ENCODE measurements at regions of chr14 and their contacts with region 1.

Region 1: GRCh38 chr14:30621940-30622830 is at the start of gene SCFD1:
- DNase-seq: peak; percentile 92
- ATAC-seq: peak; percentile 97
- H3K4me3 Mint-ChIP-seq: peak within 1 kb of the TSS; percentile 93
- H3K27ac Mint-ChIP-seq: peak within 1 kb of the TSS; percentile 93
- H3K4me1 Mint-ChIP-seq: peaks cover 47% of the 10 kb centered on the region
- H3K27me3 Mint-ChIP-seq: no peaks in the 10 kb centered on the region
- CTCF ChIP-seq: no peak
- total RNA-seq, gene SCFD1: 70.1 and 83.6 TPM in 2 replicates

Region 2: GRCh38 chr14:30558675-30559555 is 63.3 kb before region 1 on chr14 and contains the start of gene G2E3:
- CTCF ChIA-PET with region 1: no interaction called
- POLR2A ChIA-PET with region 1: interaction called, 17 read pairs
- intact Hi-C with region 1: loop called (anchors 1 kb)
- DNase-seq: peak; percentile 88
- ATAC-seq: peak; percentile 99
- H3K4me3 Mint-ChIP-seq: peak within 1 kb of the TSS; percentile 100
- H3K27ac Mint-ChIP-seq: peak within 1 kb of the TSS; percentile 98
- H3K4me1 Mint-ChIP-seq: peaks cover 29% of the 10 kb centered on the region
- H3K27me3 Mint-ChIP-seq: no peaks in the 10 kb centered on the region
- CTCF ChIP-seq: no peak
- total RNA-seq, gene G2E3: 23.5 and 32.6 TPM in 2 replicates

Region 3: GRCh38 chr14:30610787-30611343 is 11.3 kb before region 1 on chr14:
- CTCF ChIA-PET with region 1: no interaction called
- POLR2A ChIA-PET with region 1: interaction called, 5 read pairs
- intact Hi-C with region 1: loop called (anchors 1 kb)
- DNase-seq: no peak
- ATAC-seq: no peak
- H3K4me3 Mint-ChIP-seq: peak overlapping the region; percentile 38
- H3K27ac Mint-ChIP-seq: no peak overlapping the region
- H3K4me1 Mint-ChIP-seq: no peaks in the 10 kb centered on the region
- H3K27me3 Mint-ChIP-seq: no peaks in the 10 kb centered on the region
- CTCF ChIP-seq: no peak

Region 4: DNA sequence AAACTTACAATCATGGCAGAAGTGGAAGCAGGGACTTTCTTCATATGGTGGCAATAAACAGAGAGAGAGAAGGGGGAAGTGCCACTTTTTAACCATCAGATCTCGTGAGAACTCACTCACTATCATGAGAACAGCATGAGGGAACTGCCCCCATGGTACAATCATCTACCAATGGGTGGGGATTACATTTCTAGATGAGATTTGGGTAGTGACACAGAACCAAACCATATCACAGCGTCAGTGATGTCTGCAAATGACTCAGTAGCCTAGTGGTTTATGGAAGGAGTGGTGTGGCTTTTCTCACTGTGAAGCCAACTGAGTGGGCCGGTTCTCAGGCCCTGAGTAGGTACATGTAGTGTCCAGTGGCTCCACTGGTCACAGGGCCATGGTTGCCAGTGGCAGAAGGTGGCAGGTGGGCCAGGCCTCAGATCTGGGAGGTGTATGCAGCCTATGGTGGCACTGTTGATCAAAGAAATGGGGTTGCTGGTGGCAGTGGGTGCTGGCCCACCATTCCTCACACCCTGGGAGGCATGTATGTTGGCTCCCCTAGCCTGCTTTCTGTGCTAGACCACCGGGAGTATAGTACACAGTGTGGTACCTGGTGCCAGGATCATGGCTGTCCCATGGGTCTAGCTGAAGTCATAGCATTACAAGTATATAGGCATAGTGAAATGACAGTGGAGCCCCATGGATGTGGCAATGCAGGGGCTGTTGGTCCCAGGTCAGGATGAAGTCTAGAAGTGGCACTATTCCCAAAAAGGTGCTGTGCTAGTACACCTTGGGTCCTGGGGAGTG is 1130.9 kb after region 1 on chr14:
- CTCF ChIA-PET with region 1: no interaction called
- POLR2A ChIA-PET with region 1: no interaction called
- intact Hi-C with region 1: no loop called
- DNase-seq: no peak
- ATAC-seq: peak; percentile 5
- H3K4me3 Mint-ChIP-seq: no peak overlapping the region
- H3K27ac Mint-ChIP-seq: no peak overlapping the region
- H3K4me1 Mint-ChIP-seq: peaks cover 1% of the 10 kb centered on the region
- H3K27me3 Mint-ChIP-seq: no peaks in the 10 kb centered on the region
- CTCF ChIP-seq: no peak

Measured in activated B cell treated with CpG ODN at 0.5 μM for 24 hours (primary cell).